ENCODE measurements at regions of chr21 and their contacts with region 1.

Region 1: GRCh38 chr21:36156339-36156814 is 247 bp upstream of the DOP1B start:
- DNase-seq: peak; percentile 100
- H3K4me3 Mint-ChIP-seq: peak overlapping the region; percentile 82
- H3K27ac Mint-ChIP-seq: no peak overlapping the region
- H3K4me1 Mint-ChIP-seq: peaks cover 25% of the 10 kb centered on the region
- H3K27me3 Mint-ChIP-seq: no peaks in the 10 kb centered on the region

Region 2: DNA sequence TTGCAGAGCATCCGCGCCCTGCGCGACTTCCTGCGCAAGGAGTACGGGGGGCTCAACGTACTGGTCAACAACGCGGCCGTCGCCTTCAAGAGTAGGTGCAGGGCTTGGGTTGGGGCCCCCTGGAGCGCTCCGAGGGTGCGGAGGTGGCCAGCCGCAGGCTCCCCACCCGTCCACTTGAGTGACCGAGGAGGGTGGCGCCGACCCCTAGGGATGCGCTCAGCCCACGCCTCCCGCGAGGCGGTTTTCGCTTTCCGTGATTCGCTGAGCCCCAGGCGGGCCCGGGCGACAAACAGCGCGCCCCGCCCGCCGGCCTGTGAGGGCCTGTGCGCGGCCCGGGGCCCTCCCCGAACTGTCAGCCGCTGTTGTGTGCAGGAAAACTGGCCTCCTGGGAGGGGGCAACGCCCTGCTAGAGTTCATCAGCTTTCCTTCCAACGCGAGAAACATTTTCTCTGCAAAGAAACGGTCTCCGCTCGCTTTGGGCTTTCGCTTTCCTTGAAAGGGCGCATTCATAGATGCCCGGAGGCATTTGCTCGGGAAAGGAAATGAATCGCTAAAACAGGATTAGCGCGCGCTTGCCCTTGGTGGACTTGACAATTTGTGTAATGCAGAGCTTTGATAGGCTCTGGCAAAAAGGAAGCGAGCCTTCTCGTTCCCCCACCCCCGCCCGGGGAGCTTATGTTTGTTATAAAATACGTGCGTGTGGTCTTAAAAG is 20.8 kb before region 1 on chr21:
- CTCF ChIA-PET with region 1: interaction called, 70 read pairs
- POLR2A ChIA-PET with region 1: no interaction called
- intact Hi-C with region 1: loop called (anchors 1 kb)
- DNase-seq: peak; percentile 79
- H3K4me3 Mint-ChIP-seq: peak overlapping the region; percentile 91
- H3K27ac Mint-ChIP-seq: peak overlapping the region; percentile 78
- H3K4me1 Mint-ChIP-seq: peaks cover 13% of the 10 kb centered on the region
- H3K27me3 Mint-ChIP-seq: no peaks in the 10 kb centered on the region

Region 3: GRCh38 chr21:36141513-36141925 is 14.9 kb before region 1 on chr21:
- CTCF ChIA-PET with region 1: interaction called, 70 read pairs
- POLR2A ChIA-PET with region 1: no interaction called
- intact Hi-C with region 1: loop called (anchors 1 kb)
- DNase-seq: peak; percentile 89
- H3K4me3 Mint-ChIP-seq: no peak overlapping the region
- H3K27ac Mint-ChIP-seq: peak overlapping the region; percentile 64
- H3K4me1 Mint-ChIP-seq: peaks cover 24% of the 10 kb centered on the region
- H3K27me3 Mint-ChIP-seq: no peaks in the 10 kb centered on the region

Region 4: DNA sequence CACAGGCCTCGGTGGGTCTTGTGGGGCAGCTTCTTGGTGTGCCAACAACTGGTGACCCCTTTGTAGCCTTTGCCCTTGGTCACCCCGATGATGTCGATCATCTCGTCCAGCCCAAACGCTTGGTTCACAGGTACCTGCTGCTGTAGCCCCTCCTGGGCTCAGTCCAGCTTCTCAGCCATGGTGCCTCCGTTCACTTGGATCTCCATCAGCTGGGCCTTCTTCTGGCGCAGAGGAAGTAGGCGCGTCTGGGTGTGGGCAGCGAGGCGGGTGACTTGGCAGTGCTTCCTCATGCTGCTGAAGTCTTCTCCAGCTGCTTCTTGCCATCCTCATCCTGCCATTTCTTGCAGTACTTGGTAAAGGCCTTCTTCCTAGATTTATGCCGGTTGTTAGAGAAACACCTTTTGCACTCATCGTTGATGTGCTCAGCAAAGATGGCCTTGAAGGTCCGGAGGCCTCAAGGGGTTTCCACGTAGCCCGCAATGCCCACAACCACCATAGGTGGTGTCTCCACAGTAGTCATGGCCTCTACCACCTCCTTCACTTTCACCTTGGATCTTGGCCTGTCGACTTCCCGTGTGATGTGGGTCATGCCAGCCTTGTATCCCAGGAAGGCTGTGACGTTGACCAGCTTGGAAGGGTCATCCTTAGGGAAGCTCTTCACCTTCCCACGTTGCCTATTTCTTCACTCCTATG is 13.2 kb after region 1 on chr21:
- CTCF ChIA-PET with region 1: interaction called, 5 read pairs
- POLR2A ChIA-PET with region 1: interaction called, 7 read pairs
- intact Hi-C with region 1: loop called (anchors 1 kb)
- DNase-seq: no peak
- H3K4me3 Mint-ChIP-seq: no peak overlapping the region
- H3K27ac Mint-ChIP-seq: no peak overlapping the region
- H3K4me1 Mint-ChIP-seq: peaks cover 4% of the 10 kb centered on the region
- H3K27me3 Mint-ChIP-seq: no peaks in the 10 kb centered on the region

Region 5: GRCh38 chr21:36209626-36210171 is 53.3 kb after region 1 on chr21:
- CTCF ChIA-PET with region 1: interaction called, 19 read pairs
- POLR2A ChIA-PET with region 1: no interaction called
- intact Hi-C with region 1: loop called (anchors 1 kb)
- DNase-seq: peak; percentile 62
- H3K4me3 Mint-ChIP-seq: no peak overlapping the region
- H3K27ac Mint-ChIP-seq: no peak overlapping the region
- H3K4me1 Mint-ChIP-seq: peaks cover 25% of the 10 kb centered on the region
- H3K27me3 Mint-ChIP-seq: no peaks in the 10 kb centered on the region

Region 6: DNA sequence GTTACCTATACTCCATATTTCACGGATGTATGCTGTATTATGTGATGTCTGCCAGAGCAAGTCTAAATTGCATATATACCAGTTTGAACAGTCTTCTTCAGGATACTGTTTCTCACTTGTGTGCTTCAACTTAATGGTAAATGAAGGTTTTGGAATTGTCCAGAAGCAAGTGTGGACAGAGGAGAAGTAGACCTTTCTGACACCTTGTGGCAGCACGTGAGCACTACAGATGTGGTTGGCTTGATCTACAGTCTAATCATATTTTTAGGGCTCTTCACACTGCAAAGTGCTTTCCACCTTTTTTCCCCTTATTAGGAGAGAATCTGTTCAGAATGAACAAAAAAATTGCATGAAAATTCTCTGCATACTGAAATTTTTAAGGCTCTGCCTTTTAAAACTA is 174.5 kb after region 1 on chr21:
- CTCF ChIA-PET with region 1: interaction called, 4 read pairs
- POLR2A ChIA-PET with region 1: no interaction called
- intact Hi-C with region 1: loop called (anchors 1 kb)
- DNase-seq: peak; percentile 63
- H3K4me3 Mint-ChIP-seq: no peak overlapping the region
- H3K27ac Mint-ChIP-seq: peak overlapping the region; percentile 61
- H3K4me1 Mint-ChIP-seq: peaks cover 46% of the 10 kb centered on the region
- H3K27me3 Mint-ChIP-seq: no peaks in the 10 kb centered on the region

Region 7: DNA sequence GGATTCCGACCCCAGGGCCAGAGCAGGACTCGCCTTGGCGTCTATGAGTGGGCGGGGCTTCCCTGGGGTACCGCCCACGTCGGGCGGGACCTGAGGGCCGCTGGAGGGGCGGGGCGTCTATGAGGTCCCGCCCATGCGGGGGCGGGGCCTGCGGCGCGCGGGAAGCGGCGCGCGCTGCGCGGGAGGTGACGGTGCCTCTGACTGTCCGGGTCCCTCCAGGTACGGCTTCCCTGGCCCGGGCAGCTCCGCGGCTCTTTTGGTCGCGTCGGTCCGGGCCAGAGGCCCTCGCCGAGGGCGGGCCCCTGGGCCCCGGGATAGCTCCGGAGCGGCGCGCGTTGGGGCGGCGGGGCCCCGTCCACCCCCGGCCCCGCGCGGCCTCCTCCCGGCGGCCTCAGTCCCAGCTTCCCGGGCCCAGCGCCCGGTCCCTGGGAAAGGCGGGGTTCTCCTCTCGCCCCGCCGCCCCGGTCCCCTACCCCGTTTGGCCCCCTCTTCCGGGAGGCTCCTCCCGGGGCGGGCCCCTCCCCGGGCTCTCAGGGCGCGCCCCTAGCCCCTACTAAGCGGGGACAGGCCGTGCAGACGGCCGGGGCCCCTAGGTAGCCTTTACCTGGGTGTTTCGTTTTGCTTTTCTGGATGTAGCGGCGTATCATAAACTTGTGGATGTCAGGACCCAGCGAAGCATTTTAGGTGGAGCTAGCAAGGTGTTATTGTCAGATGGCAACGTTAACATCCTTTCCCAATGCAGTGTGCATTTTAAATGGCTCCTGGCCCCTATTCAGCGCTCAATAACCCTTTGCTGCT is 229.1 kb after region 1 on chr21 and contains the start of gene CHAF1B:
- CTCF ChIA-PET with region 1: interaction called, 3 read pairs
- POLR2A ChIA-PET with region 1: no interaction called
- intact Hi-C with region 1: loop called (anchors 1 kb)
- DNase-seq: peak; percentile 88
- H3K4me3 Mint-ChIP-seq: peak within 1 kb of the TSS; percentile 84
- H3K27ac Mint-ChIP-seq: peak within 1 kb of the TSS; percentile 60
- H3K4me1 Mint-ChIP-seq: peaks cover 20% of the 10 kb centered on the region
- H3K27me3 Mint-ChIP-seq: no peaks in the 10 kb centered on the region
- total RNA-seq, gene CHAF1B: 28.9 to 31.2 TPM

Measured in activated CD4-positive, alpha-beta memory T cell treated with anti-CD3 and anti-CD28 coated beads for 36 hours (primary cell).